ENCODE measurements at regions of chr1 and their contacts with region 1.

Region 1: GRCh38 chr1:46724991-46725735 is 6.2 kb upstream of the EFCAB14 start:
- DNase-seq: peak; percentile 83
- H3K4me3 ChIP-seq: no peak overlapping the region
- H3K27ac ChIP-seq: no peak overlapping the region
- H3K4me1 ChIP-seq: no peaks in the 10 kb centered on the region
- H3K27me3 ChIP-seq: peaks cover 10% of the 10 kb centered on the region
- CTCF ChIP-seq: peak; percentile 87

Region 2: GRCh38 chr1:46406881-46407608 is 318.1 kb before region 1 on chr1:
- CTCF ChIA-PET with region 1: no interaction called
- POLR2A ChIA-PET with region 1: no interaction called
- intact Hi-C with region 1: loop called (anchors 1 kb)
- DNase-seq: no peak
- H3K4me3 ChIP-seq: peak overlapping the region; percentile 14
- H3K27ac ChIP-seq: no peak overlapping the region
- H3K4me1 ChIP-seq: peaks cover 5% of the 10 kb centered on the region
- H3K27me3 ChIP-seq: no peaks in the 10 kb centered on the region
- CTCF ChIP-seq: no peak

Region 3: DNA sequence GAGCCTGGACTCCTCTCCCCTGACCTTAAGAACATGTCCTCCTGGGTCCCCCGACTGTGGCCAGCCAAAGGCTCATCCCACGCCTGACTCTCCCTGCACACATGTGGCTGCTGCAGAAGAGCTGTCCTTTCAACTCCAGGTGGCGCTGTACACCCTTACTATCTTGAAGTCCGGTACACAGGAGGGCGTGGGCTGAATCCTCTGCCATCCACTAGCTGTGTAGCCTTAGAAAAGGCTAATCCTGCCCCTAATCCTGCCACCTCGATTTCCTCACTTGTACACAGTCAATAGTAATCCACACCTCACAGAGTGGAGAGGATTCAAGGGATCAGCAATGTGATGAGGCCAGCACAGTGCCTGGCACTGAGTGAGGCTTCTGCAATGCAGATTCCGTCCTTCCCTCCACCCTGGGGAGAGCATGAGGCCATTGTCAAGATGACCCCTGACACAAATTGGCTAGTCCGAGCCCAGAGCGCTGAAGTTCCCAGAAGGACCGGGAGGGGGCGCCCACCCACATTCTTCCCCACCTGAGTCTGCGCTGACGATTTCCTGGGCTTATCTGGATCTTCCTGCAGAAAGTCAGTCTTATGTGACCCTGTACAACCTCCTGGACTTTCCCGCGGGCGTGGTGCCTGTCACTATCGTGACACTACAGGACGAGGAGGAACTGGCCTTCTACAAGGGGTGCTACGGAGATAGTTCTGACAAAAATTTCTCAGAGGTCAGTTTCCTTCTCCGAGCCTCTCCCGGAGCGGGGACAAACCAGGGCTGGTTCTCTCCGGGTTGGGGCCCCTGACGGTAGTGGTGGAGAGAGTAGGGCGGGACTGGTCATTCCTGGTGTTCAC is 282.6 kb before region 1 on chr1:
- CTCF ChIA-PET with region 1: interaction called, 8 read pairs
- POLR2A ChIA-PET with region 1: no interaction called
- intact Hi-C with region 1: loop called (anchors 2 kb)
- DNase-seq: peak; percentile 92
- H3K4me3 ChIP-seq: no peak overlapping the region
- H3K27ac ChIP-seq: no peak overlapping the region
- H3K4me1 ChIP-seq: no peaks in the 10 kb centered on the region
- H3K27me3 ChIP-seq: peaks cover 6% of the 10 kb centered on the region
- CTCF ChIP-seq: peak; percentile 85

Region 4: GRCh38 chr1:46527474-46528296 is 197.5 kb before region 1 on chr1:
- CTCF ChIA-PET with region 1: interaction called, 3 read pairs
- POLR2A ChIA-PET with region 1: no interaction called
- intact Hi-C with region 1: loop called (anchors 2 kb)
- DNase-seq: peak; percentile 83
- H3K4me3 ChIP-seq: no peak overlapping the region
- H3K27ac ChIP-seq: no peak overlapping the region
- H3K4me1 ChIP-seq: peaks cover 40% of the 10 kb centered on the region
- H3K27me3 ChIP-seq: peaks cover 18% of the 10 kb centered on the region
- CTCF ChIP-seq: peak; percentile 95

Region 5: GRCh38 chr1:46547481-46548383 is 177.4 kb before region 1 on chr1:
- CTCF ChIA-PET with region 1: no interaction called
- POLR2A ChIA-PET with region 1: no interaction called
- intact Hi-C with region 1: loop called (anchors 5 kb)
- DNase-seq: peak; percentile 80
- H3K4me3 ChIP-seq: no peak overlapping the region
- H3K27ac ChIP-seq: no peak overlapping the region
- H3K4me1 ChIP-seq: no peaks in the 10 kb centered on the region
- H3K27me3 ChIP-seq: peaks cover 38% of the 10 kb centered on the region
- CTCF ChIP-seq: peak; percentile 74

Region 6: GRCh38 chr1:46622344-46622743 is 102.8 kb before region 1 on chr1:
- CTCF ChIA-PET with region 1: no interaction called
- POLR2A ChIA-PET with region 1: no interaction called
- intact Hi-C with region 1: loop called (anchors 2 kb)
- DNase-seq: peak; percentile 76
- H3K4me3 ChIP-seq: no peak overlapping the region
- H3K27ac ChIP-seq: no peak overlapping the region
- H3K4me1 ChIP-seq: peaks cover 4% of the 10 kb centered on the region
- H3K27me3 ChIP-seq: no peaks in the 10 kb centered on the region
- CTCF ChIP-seq: peak; percentile 68